ENCODE measurements at regions of chr9 and their contacts with region 1.

Region 1: GRCh38 chr9:122457787-122458186 is 19.9 kb downstream of the OR1J1 start:
- DNase-seq: no peak
- H3K4me3 ChIP-seq: no peak overlapping the region
- H3K27ac ChIP-seq: no peak overlapping the region
- H3K4me1 ChIP-seq: no peaks in the 10 kb centered on the region
- H3K27me3 ChIP-seq: no peaks in the 10 kb centered on the region
- CTCF ChIP-seq: no peak
- POLR2A ChIP-seq: no peak

Region 2: GRCh38 chr9:122236681-122237080 is 221.1 kb before region 1 on chr9:
- intact Hi-C with region 1: no loop called
- DNase-seq: no peak
- H3K4me3 ChIP-seq: no peak overlapping the region
- H3K27ac ChIP-seq: no peak overlapping the region
- H3K4me1 ChIP-seq: no peaks in the 10 kb centered on the region
- H3K27me3 ChIP-seq: peaks cover 0 to 1% of the 10 kb centered on the region in 2 donors
- CTCF ChIP-seq: no peak
- POLR2A ChIP-seq: no peak

Region 3: GRCh38 chr9:122418016-122418415 is 39.8 kb before region 1 on chr9:
- intact Hi-C with region 1: loop called (anchors 2 kb)
- DNase-seq: no peak
- H3K4me3 ChIP-seq: no peak overlapping the region
- H3K27ac ChIP-seq: no peak overlapping the region
- H3K4me1 ChIP-seq: no peaks in the 10 kb centered on the region
- H3K27me3 ChIP-seq: no peaks in the 10 kb centered on the region
- CTCF ChIP-seq: no peak
- POLR2A ChIP-seq: no peak

Region 4: GRCh38 chr9:122810306-122810946 is 352.6 kb after region 1 on chr9:
- intact Hi-C with region 1: no loop called
- DNase-seq: peak; percentile 53 to 78
- H3K4me3 ChIP-seq: peak overlapping the region in 1 of 3 donors; percentile 4
- H3K27ac ChIP-seq: peak overlapping the region; percentile 45 to 56
- H3K4me1 ChIP-seq: no peaks in the 10 kb centered on the region
- H3K27me3 ChIP-seq: no peaks in the 10 kb centered on the region
- CTCF ChIP-seq: peak; percentile 83 to 91 (median 88)
- POLR2A ChIP-seq: no peak